Panc1 (cell line): ENCODE measurements at regions of chr19 and their contacts with region 1.

Region 1: GRCh38 chr19:40312533-40312932 is 27.4 kb upstream of the AKT2 start:
- DNase-seq: no peak
- ATAC-seq: no peak
- H3K4me3 ChIP-seq: no peak overlapping the region
- H3K27ac ChIP-seq: no peak overlapping the region
- H3K4me1 ChIP-seq: no peaks in the 10 kb centered on the region
- H3K27me3 ChIP-seq: peaks cover 12% of the 10 kb centered on the region; the same call in 1 of the 2 replicates
- CTCF ChIP-seq: no peak

Region 2: DNA sequence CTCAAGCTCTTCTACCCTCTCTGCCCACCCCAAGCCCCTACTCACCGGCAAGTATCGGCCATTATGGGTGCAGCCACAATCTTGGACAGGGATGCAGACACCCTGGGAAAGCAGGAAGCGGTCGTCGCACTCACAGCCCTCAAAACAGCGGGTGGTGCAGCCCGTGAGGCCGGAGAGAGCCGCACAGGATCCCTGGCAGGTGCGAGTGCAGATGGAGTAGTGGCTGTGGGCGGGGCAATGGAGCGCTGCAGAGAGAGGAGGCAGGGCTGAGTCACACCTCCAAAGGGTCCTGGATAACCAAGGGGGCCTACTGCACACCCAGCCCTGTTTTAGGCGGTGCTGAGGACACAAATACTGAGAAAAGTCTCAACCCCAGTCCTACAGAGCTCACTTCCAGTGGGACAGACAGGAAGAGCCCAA is 442.4 kb before region 1 on chr19:
- CTCF ChIA-PET with region 1: interaction called, 7 read pairs
- POLR2A ChIA-PET with region 1: interaction called, 10 read pairs
- in situ Hi-C with region 1: no loop called
- intact Hi-C with region 1: no loop called
- DNase-seq: no peak
- ATAC-seq: 0 out of 2 replicates have a peak, but pooled peaks have one; percentile 0
- H3K4me3 ChIP-seq: no peak overlapping the region
- H3K27ac ChIP-seq: no peak overlapping the region
- H3K4me1 ChIP-seq: no peaks in the 10 kb centered on the region
- H3K27me3 ChIP-seq: peaks cover 12% of the 10 kb centered on the region; the same call in 1 of the 2 replicates
- CTCF ChIP-seq: no peak

Region 3: GRCh38 chr19:40294560-40294959 is 18.0 kb before region 1 on chr19:
- CTCF ChIA-PET with region 1: interaction called, 11 read pairs
- POLR2A ChIA-PET with region 1: interaction called, 11 read pairs
- in situ Hi-C with region 1: no loop called
- intact Hi-C with region 1: no loop called
- DNase-seq: no peak
- ATAC-seq: peak; percentile 4
- H3K4me3 ChIP-seq: no peak overlapping the region
- H3K27ac ChIP-seq: no peak overlapping the region
- H3K4me1 ChIP-seq: no peaks in the 10 kb centered on the region
- H3K27me3 ChIP-seq: peaks cover 4% of the 10 kb centered on the region; the same call in 1 of the 2 replicates
- CTCF ChIP-seq: no peak

Region 4: DNA sequence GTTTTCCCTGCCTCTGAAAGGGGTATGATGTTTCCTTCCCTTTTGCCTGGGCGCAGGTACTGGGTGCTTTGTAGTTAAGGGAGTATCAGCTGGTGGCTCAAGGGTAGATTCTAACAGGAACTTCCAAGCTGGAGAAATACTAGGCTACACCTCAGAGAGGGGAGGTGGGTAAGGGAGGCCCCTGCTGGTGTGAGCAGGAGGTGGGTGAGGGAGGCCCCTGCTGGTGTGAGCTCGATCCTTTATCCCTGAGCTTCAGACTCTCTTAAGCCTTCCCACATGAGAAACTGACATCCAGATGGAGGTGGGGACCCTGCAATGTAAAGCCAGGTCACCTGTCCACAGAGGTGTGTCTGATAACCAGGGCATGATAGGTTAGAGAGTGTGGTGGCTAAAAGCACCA is 710.7 kb after region 1 on chr19:
- CTCF ChIA-PET with region 1: no interaction called
- POLR2A ChIA-PET with region 1: no interaction called
- in situ Hi-C with region 1: no loop called
- intact Hi-C with region 1: no loop called
- DNase-seq: no peak
- ATAC-seq: no peak
- H3K4me3 ChIP-seq: no peak overlapping the region
- H3K27ac ChIP-seq: no peak overlapping the region
- H3K4me1 ChIP-seq: no peaks in the 10 kb centered on the region
- H3K27me3 ChIP-seq: no peaks in the 10 kb centered on the region
- CTCF ChIP-seq: no peak